CD14-positive monocyte (primary cell): ENCODE measurements at regions of chr14 and their contacts with region 1.

Region 1: DNA sequence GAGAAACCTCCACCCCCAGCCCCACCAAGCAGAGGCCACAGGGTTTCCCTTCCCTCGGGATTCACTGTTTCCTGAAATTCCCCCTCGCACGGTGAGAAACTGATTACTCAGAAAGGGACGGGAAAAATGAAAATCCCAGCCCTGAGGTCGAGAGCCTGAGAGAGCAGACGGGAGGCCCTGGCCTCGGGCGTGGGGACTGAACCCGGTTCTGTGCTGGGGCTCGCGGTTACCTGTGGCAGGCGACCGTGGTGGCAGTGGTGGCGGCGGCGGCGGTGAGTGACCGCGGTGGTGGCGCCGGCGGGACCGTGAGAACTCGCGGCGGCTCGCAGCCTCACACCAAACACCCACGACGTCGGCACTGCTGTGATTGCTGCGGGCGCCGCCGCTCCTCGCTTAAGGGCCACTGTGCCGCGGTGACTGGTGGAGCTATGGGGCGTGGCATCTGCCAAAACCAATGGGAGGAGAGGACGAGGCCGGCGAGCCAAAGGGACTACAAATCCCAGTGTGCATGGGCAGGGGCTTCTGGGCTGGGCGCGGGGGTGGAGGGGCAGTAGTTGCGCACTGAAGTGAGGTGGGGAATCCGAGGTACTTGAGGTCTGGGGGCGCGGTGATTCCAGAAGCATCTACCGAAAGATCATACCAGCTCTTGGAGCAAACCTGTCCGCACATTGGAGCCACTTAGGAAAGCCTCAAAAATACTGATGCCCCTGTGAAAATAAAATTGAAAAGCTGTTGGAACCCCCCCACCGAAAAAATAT is at the start of gene LGMN:
- DNase-seq: peak; percentile 69 to 80 (median 77)
- H3K4me3 ChIP-seq: peak within 1 kb of the TSS; percentile 23 to 73 (median 31)
- H3K4me3 Mint-ChIP-seq: peak within 1 kb of the TSS; percentile 83 to 90
- H3K27ac ChIP-seq: no peak within 1 kb of the TSS
- H3K27ac Mint-ChIP-seq: peak within 1 kb of the TSS in 6 of 7 donors; percentile 26 to 81 (median 59)
- H3K4me1 ChIP-seq: peaks cover 18 to 29% of the 10 kb centered on the region in 2 donors
- H3K4me1 Mint-ChIP-seq: peaks cover 37% of the 10 kb centered on the region
- H3K27me3 ChIP-seq: peaks cover 37 to 61% of the 10 kb centered on the region in 2 donors
- H3K27me3 Mint-ChIP-seq: peaks cover 55 to 73% (median 59%) of the 10 kb centered on the region in 3 donors
- CTCF ChIP-seq: no peak
- polyA plus RNA-seq, gene LGMN: 1.7 to 3.3 (median 2.9) TPM

Region 2: GRCh38 chr14:92729626-92730358 is 18.6 kb before region 1 on chr14:
- intact Hi-C with region 1: loop called in 1 of 2 experiments (anchors 1 kb)
- DNase-seq: peak in 2 of 3 donors; percentile 51 to 64
- H3K4me3 ChIP-seq: no peak overlapping the region
- H3K4me3 Mint-ChIP-seq: peak overlapping the region in 1 of 2 donors; percentile 70
- H3K27ac ChIP-seq: no peak overlapping the region
- H3K27ac Mint-ChIP-seq: peak overlapping the region in 3 of 7 donors; percentile 36 to 78 (median 42)
- H3K4me1 ChIP-seq: peaks cover 46 to 57% of the 10 kb centered on the region in 2 donors
- H3K4me1 Mint-ChIP-seq: peaks cover 39% of the 10 kb centered on the region
- H3K27me3 ChIP-seq: peaks cover 2 to 6% of the 10 kb centered on the region in 2 donors
- H3K27me3 Mint-ChIP-seq: peaks cover 9 to 38% (median 37%) of the 10 kb centered on the region in 3 donors
- CTCF ChIP-seq: no peak